ENCODE measurements at regions of chr15 and their contacts with region 1.

Region 1: GRCh38 chr15:69213786-69214185 is 53.4 kb downstream of the GLCE start:
- DNase-seq: no peak
- ATAC-seq: no peak
- H3K4me3 ChIP-seq: no peak overlapping the region
- H3K27ac ChIP-seq: no peak overlapping the region
- H3K4me1 ChIP-seq: peaks cover 5% of the 10 kb centered on the region; the same call in 1 of the 2 replicates
- H3K27me3 ChIP-seq: no peaks in the 10 kb centered on the region
- CTCF ChIP-seq: peak; percentile 53; the same call in 1 of the 2 replicates

Region 2: DNA sequence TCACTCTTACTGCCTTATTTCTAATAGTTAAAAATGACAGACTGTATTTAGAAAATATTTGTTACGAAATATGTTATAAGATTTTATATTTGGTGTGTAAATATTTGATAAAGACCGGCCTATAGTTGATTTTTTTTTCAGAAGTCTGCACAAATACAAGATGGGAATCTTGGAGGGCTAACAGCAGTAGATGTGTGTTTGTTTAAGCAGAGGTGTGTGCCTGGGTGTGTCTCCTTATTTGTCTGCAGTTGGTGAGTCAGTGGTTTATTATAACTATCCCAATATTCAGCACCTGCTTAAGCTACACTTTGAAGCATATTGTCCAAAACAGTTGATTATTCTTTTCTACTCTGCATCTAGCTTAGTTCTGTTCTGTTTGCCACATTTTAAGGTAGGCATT is 41.0 kb before region 1 on chr15:
- CTCF ChIA-PET with region 1: no interaction called
- POLR2A ChIA-PET with region 1: no interaction called
- intact Hi-C with region 1: loop called (anchors 5 kb)
- DNase-seq: peak; percentile 77
- ATAC-seq: peak; percentile 100
- H3K4me3 ChIP-seq: no peak overlapping the region; the same call in 1 of the 2 replicates
- H3K27ac ChIP-seq: 0 out of 2 replicates have a peak overlapping the region, but pooled peaks have one; percentile 4
- H3K4me1 ChIP-seq: peaks cover 19% of the 10 kb centered on the region
- H3K27me3 ChIP-seq: no peaks in the 10 kb centered on the region
- CTCF ChIP-seq: no peak

Measured in PC-3 (cell line).